WTC11 (cell line): ENCODE measurements at regions of chr11 and their contacts with region 1.

Region 1: GRCh38 chr11:102341844-102342318 is 5.1 kb upstream of the BIRC2 start:
- DNase-seq: peak; percentile 79
- ATAC-seq: peak; percentile 92
- H3K4me3 Mint-ChIP-seq: no peak overlapping the region
- H3K27ac Mint-ChIP-seq: no peak overlapping the region
- H3K4me1 Mint-ChIP-seq: peaks cover 14% of the 10 kb centered on the region
- H3K27me3 Mint-ChIP-seq: no peaks in the 10 kb centered on the region
- CTCF ChIP-seq: peak; percentile 66

Region 2: DNA sequence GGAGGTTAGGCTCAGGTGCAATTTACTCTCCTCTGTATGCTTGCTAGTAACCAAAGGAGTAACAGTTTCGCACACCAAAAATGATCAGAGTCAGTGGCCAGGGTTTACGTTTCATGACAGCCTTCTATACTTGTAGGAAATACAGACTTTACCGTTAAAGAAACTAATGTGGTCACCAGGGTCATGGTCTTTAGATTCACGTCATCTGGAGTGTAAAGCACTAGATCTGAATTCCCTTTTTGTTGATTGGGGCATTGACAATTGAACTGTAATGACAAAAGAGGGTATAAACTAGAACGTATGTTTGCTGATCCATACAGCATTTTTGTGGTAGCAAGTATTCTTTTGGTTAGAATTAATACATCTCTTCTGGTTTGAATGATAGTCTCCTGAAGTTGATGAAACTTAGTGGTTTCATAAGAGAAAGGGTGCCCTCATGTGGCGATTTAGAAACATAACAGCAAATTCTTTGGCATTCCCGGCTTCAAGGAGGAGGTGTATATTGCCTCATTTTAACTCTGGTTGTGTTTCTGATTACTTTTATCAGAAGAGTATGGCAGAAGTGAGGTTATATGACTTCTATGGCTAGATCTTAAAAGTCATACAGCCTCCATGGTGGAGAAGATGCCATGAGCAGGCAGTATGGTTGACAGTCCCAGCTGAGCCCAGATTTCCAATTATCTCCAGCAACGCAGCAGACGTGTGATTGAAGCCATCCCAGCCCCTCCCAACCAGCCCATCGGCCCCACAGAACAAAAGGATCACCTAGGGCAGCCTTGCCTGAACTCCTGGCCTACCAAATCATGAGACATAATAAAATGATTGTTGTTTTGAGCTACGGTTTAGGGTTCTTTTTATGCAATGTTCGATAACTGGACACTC is 153.5 kb after region 1 on chr11:
- CTCF ChIA-PET with region 1: interaction called, 15 read pairs
- POLR2A ChIA-PET with region 1: no interaction called
- DNase-seq: peak; percentile 44
- ATAC-seq: peak; percentile 94
- H3K4me3 Mint-ChIP-seq: peak overlapping the region; percentile 33; the same call in 1 of the 2 replicates
- H3K27ac Mint-ChIP-seq: peak overlapping the region; percentile 65; the same call in 1 of the 2 replicates
- H3K4me1 Mint-ChIP-seq: peaks cover 6% of the 10 kb centered on the region
- H3K27me3 Mint-ChIP-seq: no peaks in the 10 kb centered on the region
- CTCF ChIP-seq: peak; percentile 48

Region 3: GRCh38 chr11:102518296-102519094 is 176.6 kb after region 1 on chr11:
- CTCF ChIA-PET with region 1: interaction called, 15 read pairs
- POLR2A ChIA-PET with region 1: no interaction called
- DNase-seq: no peak
- ATAC-seq: peak; percentile 65
- H3K4me3 Mint-ChIP-seq: no peak overlapping the region
- H3K27ac Mint-ChIP-seq: no peak overlapping the region
- H3K4me1 Mint-ChIP-seq: no peaks in the 10 kb centered on the region
- H3K27me3 Mint-ChIP-seq: peaks cover 4% of the 10 kb centered on the region
- CTCF ChIP-seq: no peak